Calu3 (cell line): ENCODE measurements at regions of chr16 and their contacts with region 1.

Region 1: DNA sequence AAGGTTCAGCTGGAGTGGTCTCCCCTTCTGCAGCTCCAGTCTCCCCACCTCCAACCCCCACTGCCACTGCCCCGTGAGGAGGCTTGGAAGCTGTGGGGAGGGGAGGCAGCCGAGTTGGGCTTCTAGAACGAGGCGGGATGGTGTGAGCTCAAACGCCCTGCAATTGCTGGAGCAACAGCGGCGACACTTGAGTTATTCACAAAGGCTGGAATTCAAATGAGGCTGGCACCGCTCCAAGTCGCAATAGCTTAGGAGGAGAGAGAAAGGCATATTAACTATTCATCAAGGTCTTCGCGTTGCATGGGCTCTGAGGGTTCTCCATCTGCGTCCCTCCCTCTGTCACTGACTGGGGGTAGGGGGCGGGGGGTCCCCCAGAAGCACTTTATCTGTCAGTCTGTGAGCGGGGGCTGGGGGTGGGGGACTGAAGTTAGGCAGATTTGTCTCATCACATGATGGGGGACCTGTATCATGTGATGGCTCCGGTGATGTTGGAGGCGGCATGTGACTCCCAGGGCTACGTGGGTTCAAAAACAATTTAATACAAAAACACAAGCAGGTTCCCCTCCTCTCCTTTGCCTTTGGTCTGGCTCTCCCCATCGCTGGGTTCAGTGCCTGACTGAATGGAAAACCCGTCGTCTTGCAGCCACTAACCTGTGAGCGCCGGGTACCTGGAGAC is 70.5 kb downstream of the RBBP6 start:
- DNase-seq: peak; percentile 55
- H3K4me3 Mint-ChIP-seq: peak overlapping the region; percentile 66
- H3K27ac Mint-ChIP-seq: no peak overlapping the region
- H3K4me1 Mint-ChIP-seq: peaks cover 26% of the 10 kb centered on the region
- H3K27me3 Mint-ChIP-seq: peaks cover 46% of the 10 kb centered on the region
- CTCF ChIP-seq: no peak

Region 2: GRCh38 chr16:24382762-24383407 is 227.0 kb before region 1 on chr16:
- CTCF ChIA-PET with region 1: interaction called, 10 read pairs
- intact Hi-C with region 1: no loop called
- DNase-seq: no peak
- H3K4me3 Mint-ChIP-seq: no peak overlapping the region
- H3K27ac Mint-ChIP-seq: no peak overlapping the region
- H3K4me1 Mint-ChIP-seq: no peaks in the 10 kb centered on the region
- H3K27me3 Mint-ChIP-seq: peaks cover 50% of the 10 kb centered on the region
- CTCF ChIP-seq: no peak

Region 3: GRCh38 chr16:24624102-24624501 is 14.2 kb after region 1 on chr16:
- CTCF ChIA-PET with region 1: no interaction called
- intact Hi-C with region 1: no loop called
- DNase-seq: no peak
- H3K4me3 Mint-ChIP-seq: no peak overlapping the region
- H3K27ac Mint-ChIP-seq: no peak overlapping the region
- H3K4me1 Mint-ChIP-seq: peaks cover 14% of the 10 kb centered on the region
- H3K27me3 Mint-ChIP-seq: no peaks in the 10 kb centered on the region
- CTCF ChIP-seq: no peak

Region 4: GRCh38 chr16:24694931-24695330 is 85.1 kb after region 1 on chr16:
- CTCF ChIA-PET with region 1: interaction called, 12 read pairs
- intact Hi-C with region 1: no loop called
- DNase-seq: no peak
- H3K4me3 Mint-ChIP-seq: no peak overlapping the region
- H3K27ac Mint-ChIP-seq: no peak overlapping the region
- H3K4me1 Mint-ChIP-seq: no peaks in the 10 kb centered on the region
- H3K27me3 Mint-ChIP-seq: no peaks in the 10 kb centered on the region
- CTCF ChIP-seq: no peak